ENCODE measurements at regions of chr1 and their contacts with region 1.

Region 1: DNA sequence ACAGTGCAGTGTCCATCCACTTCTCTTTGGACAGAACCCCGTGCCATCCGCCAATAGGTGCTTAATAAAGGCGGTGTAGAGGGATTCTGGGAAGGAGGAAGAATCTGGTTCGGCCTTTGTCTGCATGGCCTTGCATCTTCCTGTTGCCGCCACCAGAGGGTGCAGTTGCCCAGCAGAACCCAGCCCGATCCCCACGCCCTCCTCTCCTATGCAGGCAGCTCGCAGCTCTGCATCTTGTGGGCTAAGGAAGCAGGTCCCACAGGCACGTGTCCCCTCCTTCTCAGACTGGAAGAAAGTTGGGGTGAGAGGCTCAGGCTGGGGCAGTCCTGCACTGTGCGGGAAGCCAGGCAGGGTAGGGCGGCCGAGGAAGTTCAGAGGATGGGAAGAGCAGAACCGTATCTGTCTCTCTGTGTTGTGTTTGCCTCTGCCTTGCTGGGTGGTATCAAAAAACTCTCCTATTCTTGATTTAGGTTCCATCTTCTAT is 20.8 kb downstream of the NAV1 start:
- DNase-seq: peak; percentile 79 to 88
- ATAC-seq: peak; percentile 90 to 96 (median 95)
- H3K4me3 ChIP-seq: no peak overlapping the region
- H3K27ac ChIP-seq: no peak overlapping the region
- H3K4me1 ChIP-seq: no peaks in the 10 kb centered on the region
- H3K27me3 ChIP-seq: no peaks in the 10 kb centered on the region
- CTCF ChIP-seq: peak; percentile 97

Region 2: GRCh38 chr1:201096035-201096434 is 463.7 kb before region 1 on chr1:
- intact Hi-C with region 1: no loop called
- DNase-seq: peak; percentile 86 to 94
- ATAC-seq: peak; percentile 77 to 87 (median 82)
- H3K4me3 ChIP-seq: no peak overlapping the region
- H3K27ac ChIP-seq: peak overlapping the region; percentile 95
- H3K4me1 ChIP-seq: peaks cover 69% of the 10 kb centered on the region
- H3K27me3 ChIP-seq: no peaks in the 10 kb centered on the region
- CTCF ChIP-seq: no peak

Region 3: DNA sequence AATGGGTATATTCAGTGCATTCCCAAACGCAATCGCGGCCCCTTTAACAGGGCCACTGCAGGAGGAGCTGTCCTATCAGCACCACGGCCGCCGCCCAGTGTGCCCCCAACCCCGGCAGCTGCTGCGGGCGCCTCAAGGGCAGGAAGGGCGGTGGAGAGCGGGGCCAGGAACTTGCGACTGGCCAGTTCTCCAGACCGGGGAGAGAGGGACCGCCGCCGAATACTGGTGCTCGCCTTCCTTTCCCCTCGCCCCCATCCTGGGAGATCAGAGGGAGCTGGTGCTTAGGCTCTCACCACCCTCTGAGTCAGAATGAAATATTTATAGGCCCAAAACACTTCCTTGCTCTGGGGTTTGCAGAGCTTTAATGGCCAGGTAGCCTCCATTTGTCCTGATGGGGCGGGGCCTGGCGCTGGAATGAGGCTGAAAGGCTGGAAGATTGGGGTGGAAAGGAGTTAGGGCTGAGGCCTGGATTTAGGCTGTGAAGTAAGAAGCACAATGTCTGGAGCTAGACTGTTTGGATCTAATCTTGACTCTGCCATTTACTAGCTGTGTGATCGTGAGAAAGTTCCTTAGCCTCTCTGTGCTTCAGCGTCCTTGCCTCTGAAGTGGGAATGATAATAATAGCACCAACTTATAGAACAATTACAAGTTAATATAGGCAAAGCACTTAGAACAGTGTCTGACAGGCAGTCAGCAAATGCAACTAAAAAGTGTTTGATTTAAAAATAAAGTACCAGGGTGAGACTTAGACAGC is 54.7 kb after region 1 on chr1:
- intact Hi-C with region 1: loop called in 1 of 2 experiments (anchors 5 kb)
- DNase-seq: peak in 1 of 2 donors; percentile 66
- ATAC-seq: peak in 3 of 4 donors; percentile 62 to 74 (median 69)
- H3K4me3 ChIP-seq: no peak overlapping the region
- H3K27ac ChIP-seq: no peak overlapping the region
- H3K4me1 ChIP-seq: peaks cover 14% of the 10 kb centered on the region
- H3K27me3 ChIP-seq: no peaks in the 10 kb centered on the region
- CTCF ChIP-seq: no peak

Region 4: DNA sequence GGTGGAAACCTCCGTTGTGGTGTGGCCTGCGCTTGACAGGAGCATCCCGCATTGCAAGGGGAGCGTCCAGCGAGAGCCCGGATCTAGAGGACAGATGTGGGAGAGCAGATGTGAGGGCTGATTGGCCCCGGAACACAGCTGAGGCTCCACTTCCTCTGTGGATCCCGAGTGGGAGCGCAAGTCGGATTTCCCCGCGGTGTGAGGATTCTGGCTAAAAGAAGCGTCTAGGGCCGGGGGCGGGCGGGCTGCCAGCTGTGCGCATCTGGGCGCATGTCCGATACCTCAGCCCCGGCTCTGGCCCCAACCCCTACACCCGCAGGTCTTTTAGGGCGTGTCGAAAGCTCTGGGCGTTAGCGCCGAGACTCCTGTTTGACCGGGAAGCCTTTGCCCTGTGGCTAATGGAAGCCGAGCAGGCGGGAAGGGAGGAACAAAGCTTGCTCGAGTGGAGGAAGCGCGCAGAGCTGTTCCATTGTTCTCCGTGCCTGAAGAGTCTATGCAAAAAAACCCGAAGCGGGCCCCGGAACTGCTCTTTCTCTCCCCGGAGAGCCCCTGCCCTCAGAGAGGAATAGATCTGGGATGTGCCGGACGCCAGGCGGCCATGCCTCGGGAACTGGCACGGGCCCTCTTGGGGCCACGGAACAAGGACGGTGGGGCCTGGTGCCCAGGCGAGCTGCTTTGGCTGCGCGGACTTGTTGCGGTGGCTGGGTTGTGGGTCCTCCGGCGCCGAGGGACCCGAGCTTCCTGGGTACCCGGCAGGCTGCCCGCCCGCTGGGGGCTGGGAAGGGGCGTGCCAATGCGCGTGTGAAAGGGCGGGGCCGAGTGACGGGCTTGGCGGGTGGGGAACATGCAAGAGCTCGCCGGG is 90.3 kb after region 1 on chr1:
- intact Hi-C with region 1: loop called in 1 of 2 experiments (anchors 5 kb)
- DNase-seq: peak; percentile 76 to 87
- ATAC-seq: peak; percentile 41 to 70 (median 56)
- H3K4me3 ChIP-seq: peak overlapping the region; percentile 59
- H3K27ac ChIP-seq: peak overlapping the region; percentile 32
- H3K4me1 ChIP-seq: peaks cover 21% of the 10 kb centered on the region
- H3K27me3 ChIP-seq: peaks cover 0 to 29% (median 0%) of the 10 kb centered on the region in 3 donors
- CTCF ChIP-seq: no peak

Region 5: DNA sequence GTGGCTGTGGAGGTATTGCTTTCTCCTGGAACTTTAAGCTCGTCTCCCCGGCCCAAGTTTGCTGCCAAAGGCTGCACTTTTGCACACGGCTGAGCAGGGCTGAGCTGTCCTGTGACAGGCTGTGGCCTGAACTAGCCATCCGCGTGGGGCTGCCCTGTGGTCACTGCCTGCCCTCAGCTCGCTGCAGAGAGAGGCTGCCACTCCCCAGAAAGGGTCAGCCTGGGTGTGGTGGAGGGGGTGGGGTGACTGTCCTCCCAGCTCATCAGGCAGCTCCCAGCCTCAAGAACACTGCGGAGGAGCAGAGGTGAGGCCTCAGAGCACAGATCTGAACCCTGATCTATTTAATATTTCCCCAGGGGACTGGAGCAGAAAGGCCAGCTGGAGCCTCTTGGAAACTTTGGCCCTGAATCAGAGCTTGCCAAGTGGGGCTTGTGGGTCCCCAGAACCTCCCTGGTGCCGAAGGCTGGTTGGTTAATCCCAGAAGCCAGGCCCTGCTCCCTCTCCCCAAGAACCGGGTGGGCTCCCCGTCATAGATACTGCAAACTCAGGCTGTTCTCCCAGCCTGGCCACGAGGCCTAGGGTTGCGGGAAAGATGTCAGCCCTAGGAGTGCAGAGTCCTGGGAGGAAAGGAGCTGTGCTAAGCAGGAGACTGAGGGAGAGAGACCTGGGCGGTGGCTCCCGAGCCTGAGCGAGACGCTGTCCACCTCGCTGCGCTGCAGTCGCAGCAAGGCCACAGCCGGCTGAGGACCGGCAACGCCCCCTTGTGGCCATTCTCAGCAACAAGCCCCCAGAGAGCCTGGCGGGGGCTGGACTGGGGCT is 144.1 kb after region 1 on chr1:
- intact Hi-C with region 1: loop called (anchors 1 kb)
- DNase-seq: peak; percentile 84 to 91
- ATAC-seq: peak; percentile 89 to 95 (median 93)
- H3K4me3 ChIP-seq: no peak overlapping the region
- H3K27ac ChIP-seq: peak overlapping the region; percentile 42
- H3K4me1 ChIP-seq: peaks cover 24% of the 10 kb centered on the region
- H3K27me3 ChIP-seq: no peaks in the 10 kb centered on the region
- CTCF ChIP-seq: peak; percentile 98

Region 6: DNA sequence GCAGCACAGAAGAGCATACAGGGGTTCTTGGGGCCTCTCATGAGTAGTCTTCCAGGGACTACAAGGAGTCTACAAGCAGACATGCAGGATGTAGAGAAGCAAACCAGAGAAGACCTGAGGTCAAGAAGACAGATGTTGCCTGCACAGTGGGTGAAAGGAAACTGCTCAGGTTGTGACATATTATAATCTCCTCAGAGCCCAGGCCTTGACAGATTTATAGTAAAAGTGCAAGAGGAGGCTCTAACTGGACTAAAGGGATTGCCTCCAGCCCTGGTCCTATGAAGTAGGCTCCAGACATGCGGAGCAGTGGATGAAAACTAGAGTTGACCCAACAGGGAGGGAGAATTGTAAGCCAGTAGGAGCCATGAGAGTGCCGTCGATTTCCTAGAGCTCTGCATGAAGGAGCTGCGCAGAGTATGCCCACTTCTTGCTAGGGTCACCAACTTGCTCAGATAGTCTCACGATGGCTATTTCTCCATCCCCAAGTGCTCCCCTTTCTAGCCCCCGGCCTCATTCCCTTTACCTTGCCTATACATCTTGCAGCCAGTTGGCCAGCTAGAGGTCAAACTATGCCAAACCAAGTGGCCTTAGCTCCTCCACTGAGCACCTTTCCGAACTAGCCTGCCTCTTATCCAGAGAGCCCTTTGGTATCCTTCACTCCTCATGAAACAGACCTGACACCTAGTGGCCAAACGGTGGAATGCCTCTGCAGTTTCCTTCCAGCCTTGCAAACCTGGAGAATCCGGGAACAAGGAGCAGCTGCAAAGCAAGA is 233.0 kb after region 1 on chr1:
- intact Hi-C with region 1: loop called (anchors 2 to 5 kb)
- DNase-seq: peak; percentile 57 to 78
- ATAC-seq: peak; percentile 89 to 94 (median 90)
- H3K4me3 ChIP-seq: no peak overlapping the region
- H3K27ac ChIP-seq: peak overlapping the region; percentile 48
- H3K4me1 ChIP-seq: peaks cover 19% of the 10 kb centered on the region
- H3K27me3 ChIP-seq: peaks cover 0 to 12% (median 0%) of the 10 kb centered on the region in 3 donors
- CTCF ChIP-seq: peak; percentile 92

Measured in psoas muscle (tissue), 8 donors.